Caco-2 (cell line): ENCODE measurements at regions of chr11 and their contacts with region 1.

Region 1: GRCh38 chr11:90434858-90435257 is 212.0 kb upstream of the CHORDC1 start:
- DNase-seq: peak; percentile 71 to 74
- H3K4me3 ChIP-seq: no peak overlapping the region
- H3K4me3 Mint-ChIP-seq: no peak overlapping the region
- H3K27ac Mint-ChIP-seq: no peak overlapping the region
- H3K4me1 ChIP-seq: peaks cover 34% of the 10 kb centered on the region
- H3K4me1 Mint-ChIP-seq: peaks cover 32% of the 10 kb centered on the region
- H3K27me3 ChIP-seq: no peaks in the 10 kb centered on the region
- H3K27me3 Mint-ChIP-seq: no peaks in the 10 kb centered on the region
- CTCF ChIP-seq: peak; percentile 70 to 79

Region 2: GRCh38 chr11:90204832-90205646 is 229.8 kb before region 1 on chr11:
- CTCF ChIA-PET with region 1: no interaction called
- POLR2A ChIA-PET with region 1: no interaction called
- intact Hi-C with region 1: loop called (anchors 1 kb)
- DNase-seq: peak in 1 of 2 experiments; percentile 63
- H3K4me3 ChIP-seq: no peak overlapping the region
- H3K4me3 Mint-ChIP-seq: no peak overlapping the region
- H3K27ac Mint-ChIP-seq: peak overlapping the region; percentile 28
- H3K4me1 ChIP-seq: no peaks in the 10 kb centered on the region
- H3K4me1 Mint-ChIP-seq: peaks cover 7% of the 10 kb centered on the region
- H3K27me3 ChIP-seq: no peaks in the 10 kb centered on the region
- H3K27me3 Mint-ChIP-seq: no peaks in the 10 kb centered on the region
- CTCF ChIP-seq: peak; percentile 94 to 97

Region 3: DNA sequence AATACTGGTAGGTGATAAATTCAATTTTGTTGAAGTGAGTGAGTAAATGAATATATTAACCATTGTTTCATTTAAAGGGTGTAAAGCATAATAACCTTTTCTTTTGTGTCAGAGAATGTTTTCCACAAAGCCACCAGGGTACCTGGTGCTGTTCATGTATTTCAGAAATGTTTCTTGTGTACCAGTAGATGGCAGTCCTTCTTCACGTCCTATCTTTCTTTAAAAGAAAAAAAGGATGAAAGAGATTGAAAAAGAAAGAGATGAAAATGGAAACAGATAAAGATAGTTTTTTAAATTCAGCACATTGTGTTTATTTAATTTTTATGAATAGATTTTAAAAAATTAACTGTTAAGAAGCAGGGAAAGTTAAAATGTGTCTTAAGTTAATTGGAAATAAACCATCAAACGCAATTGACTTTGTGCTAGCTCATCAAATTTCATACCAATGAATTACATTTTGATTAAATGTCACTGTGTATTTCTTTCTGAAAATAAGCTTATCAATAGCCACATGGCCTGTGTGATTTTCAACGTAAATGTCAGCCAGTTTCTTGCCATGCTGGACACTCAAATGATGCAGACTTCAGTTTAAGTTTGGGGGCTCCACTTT is 146.5 kb before region 1 on chr11:
- CTCF ChIA-PET with region 1: interaction called, 3 read pairs
- POLR2A ChIA-PET with region 1: no interaction called
- intact Hi-C with region 1: loop called (anchors 1 kb)
- DNase-seq: peak in 1 of 2 experiments; percentile 46
- H3K4me3 ChIP-seq: no peak overlapping the region
- H3K4me3 Mint-ChIP-seq: no peak overlapping the region
- H3K27ac Mint-ChIP-seq: no peak overlapping the region
- H3K4me1 ChIP-seq: peaks cover 17% of the 10 kb centered on the region
- H3K4me1 Mint-ChIP-seq: no peaks in the 10 kb centered on the region
- H3K27me3 ChIP-seq: no peaks in the 10 kb centered on the region; the same call in 1 of the 2 replicates
- H3K27me3 Mint-ChIP-seq: no peaks in the 10 kb centered on the region
- CTCF ChIP-seq: peak; percentile 86 to 90

Region 4: GRCh38 chr11:90355200-90355599 is 79.7 kb before region 1 on chr11:
- CTCF ChIA-PET with region 1: no interaction called
- POLR2A ChIA-PET with region 1: no interaction called
- intact Hi-C with region 1: no loop called
- DNase-seq: no peak
- H3K4me3 ChIP-seq: no peak overlapping the region
- H3K4me3 Mint-ChIP-seq: no peak overlapping the region
- H3K27ac Mint-ChIP-seq: no peak overlapping the region
- H3K4me1 ChIP-seq: no peaks in the 10 kb centered on the region
- H3K4me1 Mint-ChIP-seq: no peaks in the 10 kb centered on the region
- H3K27me3 ChIP-seq: no peaks in the 10 kb centered on the region
- H3K27me3 Mint-ChIP-seq: no peaks in the 10 kb centered on the region
- CTCF ChIP-seq: no peak

Region 5: DNA sequence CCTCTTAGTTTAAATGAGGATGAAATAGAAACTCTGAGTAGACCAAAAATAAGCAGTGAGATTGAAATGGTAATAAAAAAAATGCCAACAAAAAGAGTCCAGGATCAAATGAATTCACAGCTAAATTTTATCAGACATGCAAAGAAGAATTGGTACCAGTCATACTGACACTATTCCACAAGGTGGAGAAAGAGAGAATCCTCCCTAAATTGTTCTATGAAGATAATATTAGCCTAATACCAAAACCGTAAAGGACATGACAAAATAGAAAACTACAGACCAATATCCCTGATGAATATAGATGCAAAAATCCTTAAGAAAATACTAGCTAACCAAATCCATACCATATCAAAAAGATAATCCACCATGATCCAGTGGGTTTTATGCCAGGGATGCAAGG is 42.2 kb before region 1 on chr11:
- CTCF ChIA-PET with region 1: interaction called, 3 read pairs
- POLR2A ChIA-PET with region 1: no interaction called
- intact Hi-C with region 1: loop called (anchors 1 kb)
- DNase-seq: no peak
- H3K4me3 ChIP-seq: no peak overlapping the region
- H3K4me3 Mint-ChIP-seq: no peak overlapping the region
- H3K27ac Mint-ChIP-seq: no peak overlapping the region
- H3K4me1 ChIP-seq: no peaks in the 10 kb centered on the region
- H3K4me1 Mint-ChIP-seq: no peaks in the 10 kb centered on the region
- H3K27me3 ChIP-seq: no peaks in the 10 kb centered on the region
- H3K27me3 Mint-ChIP-seq: no peaks in the 10 kb centered on the region
- CTCF ChIP-seq: no peak

Region 6: DNA sequence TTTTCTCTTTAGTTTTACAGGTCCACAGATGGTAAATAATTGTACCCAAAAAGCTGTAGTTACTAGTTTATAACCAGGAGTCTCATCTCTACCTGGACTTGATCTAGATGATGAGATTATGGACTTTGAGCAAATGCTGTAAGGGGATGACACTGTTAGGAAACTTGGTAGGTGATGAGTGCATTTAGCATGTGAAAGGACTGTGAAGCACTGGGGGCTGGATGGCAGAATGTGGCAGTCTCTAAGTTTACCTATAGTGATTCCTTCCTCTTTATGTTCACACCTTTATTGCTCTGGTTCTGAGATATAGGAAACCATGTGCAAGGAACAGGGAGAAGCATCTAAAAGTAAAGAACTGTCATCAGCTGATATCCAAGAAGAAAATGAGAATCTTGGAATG is 18.7 kb after region 1 on chr11:
- CTCF ChIA-PET with region 1: no interaction called
- POLR2A ChIA-PET with region 1: no interaction called
- intact Hi-C with region 1: loop called (anchors 1 kb)
- DNase-seq: no peak
- H3K4me3 ChIP-seq: no peak overlapping the region
- H3K4me3 Mint-ChIP-seq: peak overlapping the region; percentile 18
- H3K27ac Mint-ChIP-seq: peak overlapping the region; percentile 42
- H3K4me1 ChIP-seq: peaks cover 47% of the 10 kb centered on the region
- H3K4me1 Mint-ChIP-seq: peaks cover 35% of the 10 kb centered on the region
- H3K27me3 ChIP-seq: no peaks in the 10 kb centered on the region
- H3K27me3 Mint-ChIP-seq: no peaks in the 10 kb centered on the region
- CTCF ChIP-seq: no peak

Region 7: DNA sequence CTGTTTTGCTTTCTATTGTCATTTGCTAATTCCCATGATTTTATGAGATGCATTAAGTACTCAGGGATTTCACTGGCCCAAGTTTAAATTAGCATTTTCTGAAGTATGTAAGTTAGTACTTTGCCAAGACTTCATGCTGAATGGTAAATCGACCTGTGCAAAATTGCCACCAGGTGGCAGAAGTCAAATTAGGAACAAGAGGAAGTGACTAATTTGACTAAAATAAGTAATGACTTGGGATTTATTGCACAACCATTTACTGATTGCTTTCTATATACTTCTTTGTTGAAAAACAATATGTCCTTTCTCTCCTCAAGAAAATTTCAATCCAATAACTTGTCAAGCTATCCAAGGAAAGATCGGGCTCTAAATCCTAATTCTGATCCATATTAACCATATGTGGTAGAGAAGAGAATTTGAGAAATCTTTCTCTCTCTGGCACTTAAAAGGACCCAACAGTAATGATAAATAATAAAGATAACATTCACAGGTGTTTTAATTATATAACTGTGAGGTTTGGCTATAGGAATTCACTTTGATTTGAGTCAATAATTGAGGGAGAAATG is 41.7 kb after region 1 on chr11:
- CTCF ChIA-PET with region 1: no interaction called
- POLR2A ChIA-PET with region 1: no interaction called
- intact Hi-C with region 1: no loop called
- DNase-seq: peak in 1 of 2 experiments; percentile 53
- H3K4me3 ChIP-seq: no peak overlapping the region
- H3K4me3 Mint-ChIP-seq: no peak overlapping the region
- H3K27ac Mint-ChIP-seq: no peak overlapping the region
- H3K4me1 ChIP-seq: 0 out of 2 replicates have a peak, but pooled peaks cover 3% of the 10 kb centered on the region
- H3K4me1 Mint-ChIP-seq: peaks cover 11% of the 10 kb centered on the region
- H3K27me3 ChIP-seq: no peaks in the 10 kb centered on the region
- H3K27me3 Mint-ChIP-seq: no peaks in the 10 kb centered on the region
- CTCF ChIP-seq: peak; percentile 77 to 86